ENCODE measurements at regions of chr6 and their contacts with region 1.

Region 1: DNA sequence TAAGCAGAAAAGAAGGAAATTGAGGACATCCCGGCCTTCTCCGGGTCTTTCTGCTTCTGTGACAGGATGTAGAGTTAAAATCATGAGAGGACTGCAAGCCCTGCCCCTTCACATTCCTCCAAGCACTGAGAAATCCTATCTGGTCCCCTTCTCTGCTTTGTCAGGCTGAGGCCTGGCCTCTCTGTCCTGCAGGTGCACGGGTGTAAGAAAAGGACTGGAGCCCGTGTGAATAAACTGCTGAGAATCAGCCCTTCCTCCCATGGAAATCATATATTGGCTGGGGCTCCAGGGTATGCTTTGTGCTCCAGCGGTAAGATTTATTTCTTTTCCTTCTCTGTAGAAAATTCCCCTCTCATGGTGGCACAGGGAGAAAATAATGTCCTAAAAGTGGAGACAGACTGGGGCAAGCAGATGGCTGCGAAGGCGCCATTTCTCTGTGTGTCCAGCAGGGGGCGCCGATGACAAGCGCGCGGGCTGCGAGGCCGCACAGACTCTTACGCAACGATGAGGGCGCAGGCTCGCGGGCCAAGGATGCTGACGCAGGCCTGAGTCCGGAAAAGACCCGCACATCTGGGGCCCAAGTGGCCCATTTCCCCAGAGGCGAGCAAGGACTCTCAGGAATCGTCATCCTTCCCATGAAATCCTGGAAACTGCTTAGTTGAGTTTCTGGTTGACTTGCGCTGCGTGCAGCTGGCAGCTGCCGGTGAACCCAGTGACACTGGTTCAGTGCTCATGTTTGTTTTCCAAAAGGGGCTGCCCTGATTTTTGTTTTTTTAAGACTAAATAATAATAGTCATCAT is 258.6 kb downstream of the ADGB start:
- DNase-seq: peak; percentile 87 to 92
- ATAC-seq: peak; percentile 94 to 99 (median 96)
- H3K4me3 ChIP-seq: peak overlapping the region; percentile 53
- H3K27ac ChIP-seq: no peak overlapping the region
- H3K4me1 ChIP-seq: no peaks in the 10 kb centered on the region
- H3K27me3 ChIP-seq: no peaks in the 10 kb centered on the region
- CTCF ChIP-seq: peak; percentile 100

Region 2: DNA sequence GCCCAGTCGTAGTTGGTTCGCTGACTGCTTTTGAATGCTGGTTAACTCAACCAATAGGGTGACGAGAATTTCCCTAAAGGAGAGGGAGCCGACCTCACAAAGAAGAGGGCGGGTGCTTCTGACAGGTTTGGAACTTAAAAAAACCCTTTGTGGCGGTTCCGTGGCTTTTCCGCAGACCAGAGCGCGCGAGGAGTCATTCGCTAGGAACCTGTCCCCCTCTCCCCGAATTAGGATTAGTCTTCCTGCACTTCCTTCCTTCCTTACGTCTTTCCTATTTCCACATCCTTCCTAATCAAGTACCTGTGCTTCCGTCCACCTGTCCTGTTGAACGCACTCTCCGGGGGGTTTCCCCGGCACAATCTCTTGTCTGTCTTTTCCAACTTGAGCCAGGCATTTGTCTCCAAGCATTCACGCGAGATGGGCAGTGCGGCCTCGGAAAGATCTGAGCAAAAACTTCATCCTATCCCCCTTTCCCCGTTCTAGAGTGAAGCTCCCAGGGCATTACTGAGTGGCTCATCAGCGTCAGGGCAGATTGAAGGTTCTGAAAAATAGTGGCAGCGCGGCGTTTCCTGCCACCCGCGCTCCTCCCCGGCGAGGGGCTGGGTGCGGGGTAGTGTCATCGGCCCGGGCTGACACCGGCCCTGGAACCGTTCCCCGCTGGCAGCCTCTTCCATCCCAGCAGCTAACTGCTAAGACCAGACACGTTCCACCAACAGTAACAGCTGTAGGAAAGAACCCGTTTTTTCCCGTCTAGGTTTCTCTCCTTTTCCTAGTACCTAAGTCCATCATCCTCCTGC is 345.3 kb after region 1 on chr6:
- intact Hi-C with region 1: loop called in 1 of 2 experiments (anchors 10 kb)
- DNase-seq: peak; percentile 74 to 81
- ATAC-seq: peak; percentile 87 to 92 (median 92)
- H3K4me3 ChIP-seq: peak overlapping the region; percentile 94
- H3K27ac ChIP-seq: peak overlapping the region; percentile 98
- H3K4me1 ChIP-seq: peaks cover 12% of the 10 kb centered on the region
- H3K27me3 ChIP-seq: no peaks in the 10 kb centered on the region
- CTCF ChIP-seq: no peak

Region 3: DNA sequence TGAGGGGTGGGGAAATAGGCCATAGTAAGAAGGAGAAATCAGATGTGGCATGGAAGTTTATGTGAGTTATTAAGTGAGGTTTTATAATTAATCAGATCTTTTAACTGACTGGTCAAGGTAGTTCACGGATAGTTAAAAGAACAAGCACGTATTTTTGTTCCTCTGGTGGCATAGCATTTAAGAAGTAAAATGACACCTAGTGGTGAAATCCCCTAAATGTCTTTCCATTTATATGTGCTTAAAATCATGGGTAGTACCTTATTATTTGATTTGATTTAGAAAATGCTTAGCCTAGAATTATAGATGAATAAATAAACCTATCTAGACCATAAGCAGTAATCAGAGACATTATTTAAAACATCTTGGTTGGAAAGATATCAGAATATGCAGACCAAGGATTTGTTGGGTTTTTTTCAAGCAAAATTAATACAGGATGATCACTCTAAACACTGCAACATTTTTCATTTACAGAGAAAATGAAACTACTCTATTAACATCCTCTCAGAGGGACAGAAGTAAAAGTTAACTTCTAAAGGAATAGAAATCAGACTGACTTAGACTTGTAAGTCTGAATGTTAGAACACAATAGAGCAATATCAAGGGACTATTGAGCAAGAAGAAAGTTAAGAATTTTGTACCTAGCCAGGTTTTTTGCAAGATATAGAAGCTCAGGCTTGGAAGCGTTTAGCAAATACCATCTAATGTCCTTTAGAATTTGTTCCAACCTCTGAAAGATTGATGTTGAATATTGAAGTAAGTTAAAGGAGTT is 427.9 kb after region 1 on chr6:
- intact Hi-C with region 1: loop called (anchors 5 kb)
- DNase-seq: no peak
- ATAC-seq: peak in 2 of 4 donors; percentile 37 to 85
- H3K4me3 ChIP-seq: no peak overlapping the region
- H3K27ac ChIP-seq: no peak overlapping the region
- H3K4me1 ChIP-seq: peaks cover 11% of the 10 kb centered on the region
- H3K27me3 ChIP-seq: no peaks in the 10 kb centered on the region
- CTCF ChIP-seq: peak; percentile 52

Region 4: GRCh38 chr6:148166339-148166968 is 1309.1 kb after region 1 on chr6:
- intact Hi-C with region 1: loop called in 1 of 2 experiments (anchors 10 kb)
- DNase-seq: no peak
- ATAC-seq: no peak
- H3K4me3 ChIP-seq: no peak overlapping the region
- H3K27ac ChIP-seq: no peak overlapping the region
- H3K4me1 ChIP-seq: no peaks in the 10 kb centered on the region
- H3K27me3 ChIP-seq: peaks cover 0 to 4% (median 0%) of the 10 kb centered on the region in 3 donors
- CTCF ChIP-seq: peak; percentile 70